ENCODE measurements at regions of chr1 and their contacts with region 1.

Region 1: GRCh38 chr1:15323351-15323988 is 76.4 kb downstream of the FHAD1 start:
- DNase-seq: peak; percentile 81
- H3K4me3 Mint-ChIP-seq: no peak overlapping the region
- H3K27ac Mint-ChIP-seq: no peak overlapping the region
- H3K4me1 Mint-ChIP-seq: no peaks in the 10 kb centered on the region
- H3K27me3 Mint-ChIP-seq: peaks cover 3% of the 10 kb centered on the region

Region 2: GRCh38 chr1:15304701-15305467 is 18.6 kb before region 1 on chr1:
- CTCF ChIA-PET with region 1: interaction called, 10 read pairs
- POLR2A ChIA-PET with region 1: no interaction called
- intact Hi-C with region 1: no loop called
- DNase-seq: peak; percentile 77
- H3K4me3 Mint-ChIP-seq: no peak overlapping the region
- H3K27ac Mint-ChIP-seq: no peak overlapping the region
- H3K4me1 Mint-ChIP-seq: peaks cover 5% of the 10 kb centered on the region
- H3K27me3 Mint-ChIP-seq: peaks cover 7% of the 10 kb centered on the region

Region 3: GRCh38 chr1:15409388-15410222 is 86.1 kb after region 1 on chr1 and contains the start of gene EFHD2:
- CTCF ChIA-PET with region 1: interaction called, 12 read pairs
- POLR2A ChIA-PET with region 1: no interaction called
- intact Hi-C with region 1: no loop called
- DNase-seq: peak; percentile 86
- H3K4me3 Mint-ChIP-seq: peak within 1 kb of the TSS; percentile 92
- H3K27ac Mint-ChIP-seq: peak within 1 kb of the TSS; percentile 81
- H3K4me1 Mint-ChIP-seq: peaks cover 34% of the 10 kb centered on the region
- H3K27me3 Mint-ChIP-seq: no peaks in the 10 kb centered on the region
- total RNA-seq, gene EFHD2: 60.4 to 61.3 TPM

Region 4: DNA sequence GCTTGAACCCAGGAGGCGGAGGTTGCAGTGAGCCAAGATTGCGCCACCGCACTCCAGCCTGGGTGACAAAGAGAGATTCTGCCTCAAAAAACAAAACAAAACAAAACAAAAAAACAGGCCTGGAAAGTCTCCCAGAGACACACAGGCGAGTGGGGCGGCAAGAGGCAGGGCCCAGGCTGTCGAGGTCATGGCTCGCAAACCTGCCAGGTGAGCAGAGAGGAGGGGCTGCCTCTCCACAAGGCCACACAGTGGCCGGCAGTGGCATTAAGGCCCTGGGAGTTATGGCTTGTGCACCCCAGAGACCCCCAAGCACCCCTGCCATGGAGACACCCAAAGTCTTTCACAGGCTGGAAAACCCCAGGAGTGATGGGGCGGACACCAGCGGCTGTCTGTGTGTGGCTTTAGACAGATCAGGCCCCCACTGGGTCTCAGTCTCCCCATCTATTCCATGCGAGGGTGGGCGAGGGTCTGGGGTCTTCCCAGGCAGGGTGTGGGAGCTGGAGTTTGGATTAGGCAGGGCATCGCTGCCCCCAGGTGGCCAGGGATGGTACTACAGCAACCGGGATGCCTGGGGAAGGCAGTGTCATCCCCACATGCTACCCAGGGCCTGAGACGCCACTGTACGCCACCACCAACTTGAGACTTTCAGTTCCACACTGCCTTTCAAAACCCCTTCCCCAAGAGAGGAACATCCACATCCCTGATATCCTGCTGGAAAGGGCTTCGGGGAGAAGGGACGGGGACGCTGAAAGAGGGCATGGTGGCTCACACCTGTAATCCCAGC is 107.5 kb after region 1 on chr1:
- CTCF ChIA-PET with region 1: interaction called, 203 read pairs
- POLR2A ChIA-PET with region 1: interaction called, 5 read pairs
- intact Hi-C with region 1: loop called (anchors 1 kb)
- DNase-seq: peak; percentile 81
- H3K4me3 Mint-ChIP-seq: no peak overlapping the region
- H3K27ac Mint-ChIP-seq: no peak overlapping the region
- H3K4me1 Mint-ChIP-seq: peaks cover 4% of the 10 kb centered on the region
- H3K27me3 Mint-ChIP-seq: no peaks in the 10 kb centered on the region

Region 5: DNA sequence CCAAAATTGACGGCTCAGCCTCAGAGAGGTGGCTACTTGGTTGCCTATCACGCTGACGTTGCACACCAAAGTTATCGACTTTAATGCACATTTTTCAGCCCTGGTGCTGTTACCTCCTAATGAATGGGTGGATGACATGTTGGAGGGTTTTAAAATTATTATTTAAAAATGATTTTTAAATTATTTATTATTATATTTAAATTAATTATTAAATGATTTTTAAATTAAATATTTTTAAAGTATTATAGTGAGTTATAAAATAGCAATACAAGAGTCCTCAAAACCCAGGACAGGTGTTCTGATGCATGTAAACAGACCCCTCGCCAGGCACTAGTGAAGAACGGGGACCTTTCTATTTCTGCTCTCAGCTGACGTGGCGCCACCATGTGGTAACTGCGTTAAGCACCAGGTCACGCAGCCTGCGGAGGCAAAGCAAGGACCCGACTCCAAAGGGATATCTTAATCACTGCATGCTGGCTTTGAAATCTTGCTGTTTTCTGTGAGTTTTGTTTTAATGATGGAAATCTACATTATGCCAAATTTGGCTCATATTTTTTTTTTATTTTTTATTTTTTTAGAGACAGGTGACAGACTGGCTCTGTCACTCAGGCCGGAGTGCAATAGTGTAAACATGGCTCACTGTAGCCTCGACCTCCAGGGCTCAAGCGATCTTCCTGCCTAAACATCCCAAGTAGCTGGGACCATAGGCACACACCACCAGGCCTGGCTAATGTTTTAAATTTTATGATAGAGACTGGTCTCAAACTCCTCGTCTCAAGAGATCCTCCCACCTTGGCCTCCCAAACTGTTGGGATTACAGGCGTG is 177.9 kb after region 1 on chr1:
- CTCF ChIA-PET with region 1: interaction called, 5 read pairs
- POLR2A ChIA-PET with region 1: no interaction called
- intact Hi-C with region 1: loop called (anchors 5 kb)
- DNase-seq: peak; percentile 73
- H3K4me3 Mint-ChIP-seq: no peak overlapping the region
- H3K27ac Mint-ChIP-seq: no peak overlapping the region
- H3K4me1 Mint-ChIP-seq: no peaks in the 10 kb centered on the region
- H3K27me3 Mint-ChIP-seq: no peaks in the 10 kb centered on the region